Right lobe of liver (tissue), 6 donors: ENCODE measurements at regions of chr5 and their contacts with region 1.

Region 1: DNA sequence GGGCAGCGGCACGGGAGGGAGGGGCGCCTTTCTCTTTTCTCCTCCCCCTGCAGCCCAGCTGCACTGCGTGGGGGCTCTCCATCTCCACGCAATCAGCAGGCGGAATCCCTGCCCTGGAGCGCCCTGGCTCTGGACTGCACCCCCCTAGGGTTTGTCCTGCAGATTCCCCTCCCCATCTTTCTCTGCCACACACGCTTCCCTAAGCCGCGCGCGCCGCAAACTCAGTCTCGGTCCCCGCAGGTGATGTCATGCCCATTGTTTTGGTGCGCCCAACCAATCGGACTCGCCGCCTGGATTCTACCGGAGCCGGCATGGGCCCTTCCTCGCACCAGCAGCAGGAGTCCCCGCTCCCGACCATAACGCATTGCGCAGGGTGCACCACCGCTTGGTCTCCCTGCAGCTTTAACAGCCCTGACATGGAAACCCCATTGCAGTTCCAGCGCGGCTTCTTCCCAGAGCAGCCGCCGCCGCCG is at the start of gene KCNN2:
- DNase-seq: peak; percentile 88 to 95 (median 94)
- ATAC-seq: peak; percentile 84 to 92 (median 87)
- H3K4me3 ChIP-seq: peak within 1 kb of the TSS; percentile 62 to 84 (median 81)
- H3K27ac ChIP-seq: peak within 1 kb of the TSS; percentile 20 to 90 (median 82)
- H3K4me1 ChIP-seq: peaks cover 0 to 8% (median 0%) of the 10 kb centered on the region in 4 donors
- H3K27me3 ChIP-seq: no peaks in the 10 kb centered on the region
- CTCF ChIP-seq: no peak
- POLR2A ChIP-seq: peak; percentile 32
- total RNA-seq, gene KCNN2: 0.60 to 17.4 (median 6.5) TPM

Region 2: GRCh38 chr5:114070093-114070722 is 291.6 kb before region 1 on chr5:
- intact Hi-C with region 1: no loop called
- DNase-seq: no peak
- ATAC-seq: no peak
- H3K4me3 ChIP-seq: no peak overlapping the region
- H3K27ac ChIP-seq: no peak overlapping the region
- H3K4me1 ChIP-seq: no peaks in the 10 kb centered on the region
- H3K27me3 ChIP-seq: no peaks in the 10 kb centered on the region
- CTCF ChIP-seq: no peak
- POLR2A ChIP-seq: no peak

Region 3: GRCh38 chr5:114391321-114391720 is 29.6 kb after region 1 on chr5:
- intact Hi-C with region 1: no loop called
- DNase-seq: no peak
- ATAC-seq: peak in 1 of 4 donors; percentile 36
- H3K4me3 ChIP-seq: no peak overlapping the region
- H3K27ac ChIP-seq: peak overlapping the region in 2 of 3 donors; percentile 56 to 63
- H3K4me1 ChIP-seq: peaks cover 0 to 74% (median 27%) of the 10 kb centered on the region in 4 donors
- H3K27me3 ChIP-seq: no peaks in the 10 kb centered on the region
- CTCF ChIP-seq: no peak
- POLR2A ChIP-seq: no peak

Region 4: DNA sequence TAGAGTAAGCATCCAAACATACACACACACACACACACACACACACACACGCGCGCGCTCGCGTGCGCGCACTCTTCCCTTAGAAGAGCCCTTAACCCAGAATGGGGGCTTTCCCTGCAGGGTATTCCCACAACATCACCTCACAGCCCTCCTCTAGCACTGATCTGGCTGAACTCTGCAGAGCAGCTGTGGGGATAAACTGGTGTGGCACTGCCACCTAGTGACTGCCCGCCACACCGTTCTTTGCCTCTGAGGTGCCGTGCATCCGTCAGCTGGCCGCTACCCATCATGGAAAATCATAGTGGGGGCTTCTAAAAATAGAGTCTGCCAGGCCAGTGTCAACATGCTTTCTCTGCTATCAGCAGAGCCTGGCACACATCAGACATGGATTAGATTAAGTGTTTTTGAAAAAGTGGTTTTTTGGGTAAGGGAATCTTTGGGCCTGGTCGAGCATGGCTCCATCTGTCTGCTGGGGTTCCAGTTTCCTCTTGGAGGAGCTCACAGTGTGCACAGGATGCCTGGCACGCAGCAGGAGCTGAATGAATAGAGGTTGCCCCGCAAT is 88.2 kb after region 1 on chr5:
- intact Hi-C with region 1: loop called (anchors 5 to 10 kb)
- DNase-seq: peak; percentile 69 to 73 (median 70)
- ATAC-seq: peak; percentile 97 to 100 (median 98)
- H3K4me3 ChIP-seq: no peak overlapping the region
- H3K27ac ChIP-seq: no peak overlapping the region
- H3K4me1 ChIP-seq: peaks cover 0 to 18% (median 6%) of the 10 kb centered on the region in 4 donors
- H3K27me3 ChIP-seq: no peaks in the 10 kb centered on the region
- CTCF ChIP-seq: peak; percentile 73 to 85 (median 84)
- POLR2A ChIP-seq: no peak